ENCODE measurements at regions of chr19 and their contacts with region 1.

Region 1: DNA sequence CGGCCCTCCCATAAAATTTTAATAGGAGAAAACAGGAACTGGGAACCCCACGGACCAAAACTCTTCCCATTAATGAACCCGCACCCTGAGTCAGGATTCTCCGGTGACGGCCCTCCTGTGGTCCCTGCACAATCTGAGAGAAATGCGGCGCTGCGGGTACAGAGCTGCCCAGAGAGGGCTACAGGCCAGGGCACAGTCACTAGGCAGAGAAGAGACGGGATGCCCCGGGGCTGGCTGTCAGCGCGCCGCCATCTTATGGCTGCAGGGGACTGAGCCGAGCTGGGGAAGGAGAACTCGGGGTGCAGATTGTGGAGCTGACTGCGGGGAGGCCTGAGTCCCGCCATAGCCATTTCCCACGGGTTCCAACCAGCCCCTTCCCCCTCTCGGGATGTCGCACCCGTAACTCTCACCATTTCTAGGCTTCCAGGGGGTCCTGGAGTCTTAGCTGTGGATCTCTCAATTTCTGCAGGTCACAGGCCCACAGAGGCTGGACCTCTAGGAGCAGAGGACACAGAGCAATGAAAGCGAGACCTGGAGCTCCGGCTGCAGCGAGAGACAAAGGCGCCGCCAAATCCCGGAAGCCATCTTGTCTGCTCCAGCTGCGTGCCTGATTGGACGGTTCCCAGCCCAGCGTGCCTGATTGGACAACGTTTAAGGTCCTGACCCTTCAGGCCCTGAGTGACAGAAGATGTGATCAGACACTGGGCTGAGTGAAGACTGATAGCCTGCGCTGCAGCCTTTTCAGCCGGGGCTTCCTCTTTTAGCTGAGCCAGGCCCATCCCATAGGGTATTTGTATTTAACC is at the start of gene ZNF675:
- DNase-seq: peak; percentile 86 to 89
- H3K4me3 ChIP-seq: peak within 1 kb of the TSS; percentile 87
- H3K27ac ChIP-seq: peak within 1 kb of the TSS; percentile 84
- H3K4me1 ChIP-seq: peaks cover 10% of the 10 kb centered on the region
- H3K27me3 ChIP-seq: no peaks in the 10 kb centered on the region
- CTCF ChIP-seq: no peak; the same call in 1 of the 2 replicates
- total RNA-seq, gene ZNF675: 11.9 and 13.0 TPM in 2 replicates

Region 2: DNA sequence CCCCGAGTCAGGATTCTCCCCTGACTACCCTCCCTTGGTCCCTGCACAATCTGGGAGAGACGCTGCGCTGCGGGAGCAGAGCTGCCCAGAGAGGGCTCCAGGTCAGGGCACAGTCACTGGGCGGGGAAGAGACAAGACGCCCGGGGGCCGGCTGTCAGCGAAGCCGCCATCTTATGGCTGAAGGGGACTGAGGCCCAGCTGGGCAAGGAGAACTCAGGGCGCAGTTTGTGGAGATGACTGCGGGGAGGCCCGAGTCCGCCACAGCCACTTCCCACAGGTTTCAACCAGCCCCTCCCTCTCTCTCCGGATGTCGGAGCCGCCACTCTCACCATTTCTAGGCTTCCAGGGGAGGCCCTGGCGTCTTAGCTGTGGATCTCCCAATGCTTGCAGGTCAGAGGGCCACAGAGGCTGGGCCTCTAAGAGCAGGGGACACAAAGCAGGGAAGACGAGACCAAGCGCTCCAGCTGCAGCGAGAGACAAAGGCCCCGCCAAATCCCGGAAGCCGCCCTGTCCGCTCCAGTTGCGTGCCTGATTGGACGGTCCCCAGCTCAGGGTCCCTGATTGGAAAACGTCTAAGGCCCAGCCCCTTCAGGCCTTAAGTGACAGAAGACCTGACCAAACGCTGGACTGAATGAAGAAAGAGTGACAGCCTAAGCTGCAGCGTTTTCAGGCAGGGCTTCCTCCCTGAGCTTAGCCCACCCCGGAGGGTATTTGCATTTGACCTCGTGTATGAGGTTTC is 436.7 kb before region 1 on chr19 and contains the start of gene ZNF724:
- CTCF ChIA-PET with region 1: no interaction called
- POLR2A ChIA-PET with region 1: no interaction called
- intact Hi-C with region 1: loop called (anchors 5 kb)
- DNase-seq: peak; percentile 94 to 97
- H3K4me3 ChIP-seq: peak within 1 kb of the TSS; percentile 76
- H3K27ac ChIP-seq: peak within 1 kb of the TSS; percentile 50
- H3K4me1 ChIP-seq: no peaks in the 10 kb centered on the region
- H3K27me3 ChIP-seq: no peaks in the 10 kb centered on the region
- CTCF ChIP-seq: no peak
- total RNA-seq, gene ZNF724: 8.4 and 8.7 TPM in 2 replicates

Region 3: DNA sequence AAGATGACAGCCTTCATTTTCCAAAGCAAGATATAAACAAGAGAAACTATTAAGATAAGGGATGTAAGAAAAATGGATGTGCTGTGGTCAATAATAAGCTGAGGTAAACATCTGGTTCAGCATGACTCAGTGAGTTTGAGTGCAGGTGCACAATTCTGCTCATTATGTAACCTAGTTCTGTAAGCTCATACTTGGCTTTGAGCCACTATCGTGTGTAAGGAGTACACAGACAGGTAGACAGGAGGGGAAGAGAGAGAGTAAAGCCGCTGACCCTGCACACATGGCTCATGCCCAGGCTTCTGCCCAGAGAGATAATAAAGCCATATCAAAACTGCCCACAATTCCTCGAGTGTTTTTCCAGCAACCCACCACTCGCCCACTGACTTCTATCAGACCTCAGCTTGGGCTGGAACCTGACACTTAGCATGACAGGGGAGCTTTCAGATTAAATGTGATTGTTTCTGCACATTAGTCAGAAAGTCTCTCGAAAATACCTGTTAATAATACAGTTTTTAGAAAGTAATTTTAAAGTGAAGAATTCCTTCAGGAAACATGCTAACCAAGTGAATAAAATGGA is 343.3 kb before region 1 on chr19:
- CTCF ChIA-PET with region 1: no interaction called
- POLR2A ChIA-PET with region 1: interaction called, 16 read pairs
- intact Hi-C with region 1: no loop called
- DNase-seq: no peak
- H3K4me3 ChIP-seq: no peak overlapping the region
- H3K27ac ChIP-seq: no peak overlapping the region
- H3K4me1 ChIP-seq: no peaks in the 10 kb centered on the region
- H3K27me3 ChIP-seq: no peaks in the 10 kb centered on the region
- CTCF ChIP-seq: no peak

Region 4: GRCh38 chr19:23509686-23510450 is 177.0 kb before region 1 on chr19:
- CTCF ChIA-PET with region 1: no interaction called
- POLR2A ChIA-PET with region 1: no interaction called
- intact Hi-C with region 1: loop called (anchors 1 kb)
- DNase-seq: peak; percentile 74 to 99
- H3K4me3 ChIP-seq: no peak overlapping the region
- H3K27ac ChIP-seq: peak overlapping the region; percentile 65
- H3K4me1 ChIP-seq: peaks cover 22% of the 10 kb centered on the region
- H3K27me3 ChIP-seq: no peaks in the 10 kb centered on the region
- CTCF ChIP-seq: no peak

Region 5: DNA sequence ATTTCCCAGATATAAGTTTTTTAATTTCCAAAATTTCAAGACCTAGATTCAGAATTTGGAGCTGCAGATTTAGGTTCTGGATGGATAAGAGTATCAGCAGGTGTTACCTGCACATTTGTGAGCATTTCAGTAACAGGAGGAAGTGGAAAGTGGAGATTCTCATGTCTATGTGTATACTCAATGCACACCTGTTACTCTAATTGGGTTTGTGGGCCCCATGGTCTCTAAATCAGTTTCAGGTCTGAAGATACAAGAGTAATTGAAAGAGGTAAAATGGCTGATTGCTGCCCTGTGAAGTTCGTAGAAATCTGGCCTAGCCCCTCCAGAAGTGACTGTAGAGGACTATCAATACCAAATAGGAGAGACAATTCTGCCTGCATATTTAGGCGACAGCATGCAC is 13.7 kb before region 1 on chr19:
- CTCF ChIA-PET with region 1: no interaction called
- POLR2A ChIA-PET with region 1: no interaction called
- intact Hi-C with region 1: no loop called
- DNase-seq: no peak
- H3K4me3 ChIP-seq: no peak overlapping the region
- H3K27ac ChIP-seq: no peak overlapping the region
- H3K4me1 ChIP-seq: no peaks in the 10 kb centered on the region
- H3K27me3 ChIP-seq: no peaks in the 10 kb centered on the region
- CTCF ChIP-seq: no peak

Measured in PC-9 (cell line).